ENCODE measurements at regions of chr20 and their contacts with region 1.

Region 1: DNA sequence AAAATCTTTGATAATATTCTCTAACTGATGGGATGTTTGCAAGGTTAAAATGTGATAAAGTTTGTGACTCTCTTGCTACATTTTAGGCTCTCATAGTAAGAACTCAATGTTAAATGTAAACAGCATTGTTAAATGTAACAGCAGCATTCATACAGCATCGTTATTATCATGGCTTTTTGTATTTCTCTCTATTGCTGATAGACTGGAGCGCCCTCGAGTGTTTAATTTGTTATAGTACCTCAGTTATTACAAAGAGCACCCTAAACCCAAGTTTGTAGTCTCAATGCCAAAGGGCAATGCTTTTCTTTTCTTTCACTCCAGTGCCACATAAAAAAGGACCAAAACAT is 14.9 kb upstream of the TTPAL start:
- DNase-seq: no peak
- ATAC-seq: peak in 3 of 4 donors; percentile 67 to 79 (median 77)
- H3K4me3 ChIP-seq: no peak overlapping the region
- H3K27ac ChIP-seq: peak overlapping the region; percentile 66 to 94 (median 88)
- H3K4me1 ChIP-seq: peaks cover 0 to 56% (median 30%) of the 10 kb centered on the region in 4 donors
- H3K27me3 ChIP-seq: no peaks in the 10 kb centered on the region
- CTCF ChIP-seq: peak; percentile 52 to 71 (median 68)
- POLR2A ChIP-seq: no peak

Region 2: GRCh38 chr20:44384423-44385027 is 76.2 kb before region 1 on chr20:
- intact Hi-C with region 1: no loop called
- DNase-seq: peak; percentile 86
- ATAC-seq: peak; percentile 34 to 58 (median 48)
- H3K4me3 ChIP-seq: no peak overlapping the region
- H3K27ac ChIP-seq: peak overlapping the region in 1 of 3 donors; percentile 31
- H3K4me1 ChIP-seq: peaks cover 0 to 46% (median 13%) of the 10 kb centered on the region in 4 donors
- H3K27me3 ChIP-seq: no peaks in the 10 kb centered on the region
- CTCF ChIP-seq: peak; percentile 64 to 92 (median 86)
- POLR2A ChIP-seq: no peak

Region 3: DNA sequence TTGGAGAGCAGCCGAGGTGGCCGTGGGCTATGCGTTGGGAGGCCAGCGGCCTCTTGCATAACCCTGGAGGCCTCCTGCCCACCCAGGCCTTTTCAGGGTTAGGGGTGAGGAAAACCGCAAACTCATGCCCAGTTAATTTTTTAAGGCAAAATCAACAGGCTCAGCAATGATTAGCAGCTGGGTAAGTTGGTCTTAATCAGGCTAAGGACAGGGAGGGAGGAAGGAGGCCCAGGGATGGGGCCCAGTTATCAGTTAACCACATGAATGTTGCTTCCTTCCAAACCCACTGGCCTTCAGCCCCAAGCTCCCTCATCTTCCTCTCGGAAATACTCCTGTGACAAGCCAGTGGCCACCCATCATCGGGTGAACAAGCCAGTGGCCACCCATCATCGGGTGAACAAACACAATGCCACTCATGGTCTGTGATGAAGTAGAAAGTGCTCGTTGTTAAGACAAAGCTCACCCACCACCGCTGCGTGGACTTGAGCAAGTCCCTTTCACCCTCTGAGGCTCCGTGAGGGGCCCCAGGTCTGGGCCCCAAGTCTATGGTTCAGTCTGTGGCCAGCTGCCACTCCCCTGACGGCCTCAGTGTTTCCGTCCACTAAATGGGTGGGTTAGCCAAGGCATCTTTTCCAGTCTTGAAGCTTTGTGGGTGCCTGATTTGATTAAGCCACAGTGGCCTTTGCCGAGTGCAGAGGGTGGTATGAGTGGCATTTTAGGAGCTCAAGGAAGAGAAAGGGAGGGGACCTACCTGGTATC is 65.9 kb before region 1 on chr20:
- intact Hi-C with region 1: loop called (anchors 5 to 10 kb)
- DNase-seq: peak in 2 of 3 donors; percentile 83 to 92
- ATAC-seq: peak in 1 of 4 donors; percentile 79
- H3K4me3 ChIP-seq: peak overlapping the region; percentile 32 to 72 (median 72)
- H3K27ac ChIP-seq: peak overlapping the region; percentile 83 to 97 (median 94)
- H3K4me1 ChIP-seq: peaks cover 0 to 57% (median 20%) of the 10 kb centered on the region in 4 donors
- H3K27me3 ChIP-seq: no peaks in the 10 kb centered on the region
- CTCF ChIP-seq: no peak
- POLR2A ChIP-seq: peak; percentile 42

Region 4: DNA sequence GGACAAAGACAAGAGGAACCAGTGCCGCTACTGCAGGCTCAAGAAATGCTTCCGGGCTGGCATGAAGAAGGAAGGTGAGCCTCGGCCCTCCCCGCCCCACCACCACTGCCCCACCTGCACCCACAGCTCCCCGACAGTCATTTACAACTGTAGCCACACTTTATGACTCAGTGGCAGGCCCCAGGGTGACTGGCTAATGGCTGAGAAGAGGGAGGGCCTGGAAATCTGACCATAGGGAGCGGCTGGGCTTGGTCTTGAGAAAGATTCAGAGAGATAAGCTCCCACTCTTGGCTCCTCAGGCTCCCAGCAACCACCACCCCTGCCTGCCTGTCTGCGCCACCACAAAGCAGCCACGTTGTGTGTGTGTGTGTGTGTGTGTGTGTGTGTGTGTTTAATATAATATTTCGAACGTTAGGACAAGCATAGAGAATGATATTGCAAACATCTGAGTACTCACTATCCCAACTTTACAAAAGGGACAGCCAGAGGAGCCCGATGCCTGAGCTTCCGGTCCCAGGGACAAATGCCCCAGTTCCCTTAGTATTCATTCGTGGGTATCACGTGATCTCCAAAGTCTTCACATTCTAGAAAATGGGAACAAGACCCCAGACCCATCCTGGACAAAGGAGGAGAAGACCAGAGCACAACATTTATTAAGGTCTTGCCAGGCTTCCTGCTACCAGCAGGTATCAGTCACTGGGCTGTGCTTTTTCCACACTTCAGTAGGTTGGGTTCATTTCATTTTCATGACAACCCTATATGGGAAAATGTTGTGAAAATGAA is 53.2 kb before region 1 on chr20:
- intact Hi-C with region 1: loop called in 1 of 2 experiments (anchors 10 kb)
- DNase-seq: peak in 1 of 3 donors; percentile 46
- ATAC-seq: no peak
- H3K4me3 ChIP-seq: no peak overlapping the region
- H3K27ac ChIP-seq: peak overlapping the region in 1 of 3 donors; percentile 93
- H3K4me1 ChIP-seq: peaks cover 0 to 76% (median 26%) of the 10 kb centered on the region in 4 donors
- H3K27me3 ChIP-seq: no peaks in the 10 kb centered on the region
- CTCF ChIP-seq: no peak
- POLR2A ChIP-seq: no peak